H1 (cell line): ENCODE measurements at regions of chr7 and their contacts with region 1.

Region 1: GRCh38 chr7:142898377-142899170 is 13.0 kb upstream of the TRPV6 start:
- DNase-seq: peak in 1 of 2 experiments; percentile 17
- H3K4me3 ChIP-seq: no peak overlapping the region
- H3K27ac ChIP-seq: no peak overlapping the region
- H3K4me1 ChIP-seq: peaks cover 0 to 3% (median 0%) of the 10 kb centered on the region in 4 experiments; a peak in 1 of 7 replicates
- H3K27me3 ChIP-seq: no peaks in the 10 kb centered on the region; a peak in 1 of 7 replicates
- CTCF ChIP-seq: no peak
- EP300 ChIP-seq: no peak
- POLR2A ChIP-seq: no peak
- RAD21 ChIP-seq: no peak

Region 2: GRCh38 chr7:142733271-142733670 is 165.3 kb before region 1 on chr7:
- CTCF ChIA-PET with region 1: no interaction called
- POLR2A ChIA-PET with region 1: no interaction called
- DNase-seq: no peak
- H3K4me3 ChIP-seq: no peak overlapping the region
- H3K27ac ChIP-seq: no peak overlapping the region
- H3K4me1 ChIP-seq: 0 out of 7 replicates have a peak, but pooled peaks cover 0 to 2% (median 0%) of the 10 kb centered on the region in 4 experiments
- H3K27me3 ChIP-seq: no peaks in the 10 kb centered on the region
- CTCF ChIP-seq: no peak
- EP300 ChIP-seq: no peak
- POLR2A ChIP-seq: no peak
- RAD21 ChIP-seq: no peak

Region 3: GRCh38 chr7:142908921-142909890 is 10.6 kb after region 1 on chr7:
- CTCF ChIA-PET with region 1: interaction called, 34 read pairs
- POLR2A ChIA-PET with region 1: interaction called, 4 read pairs
- DNase-seq: no peak
- H3K4me3 ChIP-seq: no peak overlapping the region
- H3K27ac ChIP-seq: no peak overlapping the region
- H3K4me1 ChIP-seq: no peaks in the 10 kb centered on the region
- H3K27me3 ChIP-seq: no peaks in the 10 kb centered on the region
- CTCF ChIP-seq: peak; percentile 41 to 72 (median 53)
- EP300 ChIP-seq: no peak
- POLR2A ChIP-seq: no peak
- RAD21 ChIP-seq: peak; percentile 43 to 55

Region 4: GRCh38 chr7:143002106-143002505 is 103.5 kb after region 1 on chr7:
- CTCF ChIA-PET with region 1: interaction called, 22 read pairs
- POLR2A ChIA-PET with region 1: no interaction called
- DNase-seq: no peak
- H3K4me3 ChIP-seq: no peak overlapping the region
- H3K27ac ChIP-seq: no peak overlapping the region
- H3K4me1 ChIP-seq: no peaks in the 10 kb centered on the region
- H3K27me3 ChIP-seq: no peaks in the 10 kb centered on the region
- CTCF ChIP-seq: peak in 2 of 3 experiments; percentile 53 to 64; a peak in 3 of 4 replicates
- EP300 ChIP-seq: no peak
- POLR2A ChIP-seq: no peak
- RAD21 ChIP-seq: peak; percentile 79 to 86